PC-9 (cell line): ENCODE measurements at regions of chr7 and their contacts with region 1.

Region 1: DNA sequence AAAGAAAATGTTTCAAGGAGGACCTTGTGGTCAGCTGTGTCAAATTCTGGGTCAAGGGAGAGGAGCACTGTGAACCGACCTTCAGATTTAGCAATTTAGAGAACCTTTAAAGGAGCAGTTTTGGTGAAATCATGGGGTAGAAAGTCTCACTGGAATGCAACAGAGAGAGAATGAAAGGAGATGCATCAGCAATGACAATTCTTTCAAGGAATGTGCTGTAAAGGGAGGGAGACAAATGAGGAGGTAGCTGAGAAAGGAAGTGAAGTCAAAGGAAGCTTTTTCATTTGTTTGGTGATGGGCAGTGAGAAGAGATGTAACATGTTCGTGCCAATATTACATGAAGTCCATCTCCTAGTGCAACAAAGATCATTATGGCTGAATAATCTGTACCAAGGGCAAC is 166.0 kb downstream of the TSPAN12 start:
- DNase-seq: no peak
- H3K4me3 ChIP-seq: no peak overlapping the region
- H3K27ac ChIP-seq: no peak overlapping the region
- H3K4me1 ChIP-seq: no peaks in the 10 kb centered on the region
- H3K27me3 ChIP-seq: no peaks in the 10 kb centered on the region
- CTCF ChIP-seq: no peak

Region 2: GRCh38 chr7:120639884-120640283 is 52.0 kb before region 1 on chr7:
- CTCF ChIA-PET with region 1: no interaction called
- POLR2A ChIA-PET with region 1: no interaction called
- intact Hi-C with region 1: loop called (anchors 10 kb)
- DNase-seq: no peak
- H3K4me3 ChIP-seq: no peak overlapping the region
- H3K27ac ChIP-seq: no peak overlapping the region
- H3K4me1 ChIP-seq: no peaks in the 10 kb centered on the region
- H3K27me3 ChIP-seq: no peaks in the 10 kb centered on the region
- CTCF ChIP-seq: no peak